Right ventricle myocardium superior (tissue), 1 donor: ENCODE measurements at regions of chr13 and their contacts with region 1.

Region 1: DNA sequence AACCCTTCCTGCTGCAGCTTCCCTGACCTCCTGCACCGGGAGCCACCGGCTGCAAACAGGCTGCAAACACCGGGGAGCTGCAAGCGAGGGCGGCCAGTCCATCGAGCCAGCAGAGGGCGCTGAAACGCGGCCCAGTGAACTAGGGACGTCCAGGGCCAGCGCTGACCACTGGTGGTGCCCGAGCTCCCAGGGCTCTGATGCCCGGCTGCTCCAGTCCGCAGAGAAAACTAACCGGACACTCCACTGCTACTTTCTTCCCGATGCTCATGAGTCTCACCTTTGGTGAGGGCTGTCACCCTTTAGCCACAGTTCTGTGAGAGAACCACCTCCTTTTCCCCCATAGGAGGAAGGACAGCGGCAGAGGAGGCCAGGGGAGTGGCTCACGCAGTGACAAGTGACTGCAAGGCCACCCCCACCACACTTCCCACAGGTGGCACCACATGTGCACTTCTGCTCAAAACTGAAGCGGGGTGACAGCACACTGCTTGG is 82.8 kb upstream of the MTIF3 start:
- DNase-seq: peak; percentile 90
- ATAC-seq: peak; percentile 99

Region 2: GRCh38 chr13:27374650-27375049 is 158.5 kb before region 1 on chr13:
- intact Hi-C with region 1: loop called (anchors 2 kb)
- DNase-seq: no peak
- ATAC-seq: peak; percentile 98

Region 3: DNA sequence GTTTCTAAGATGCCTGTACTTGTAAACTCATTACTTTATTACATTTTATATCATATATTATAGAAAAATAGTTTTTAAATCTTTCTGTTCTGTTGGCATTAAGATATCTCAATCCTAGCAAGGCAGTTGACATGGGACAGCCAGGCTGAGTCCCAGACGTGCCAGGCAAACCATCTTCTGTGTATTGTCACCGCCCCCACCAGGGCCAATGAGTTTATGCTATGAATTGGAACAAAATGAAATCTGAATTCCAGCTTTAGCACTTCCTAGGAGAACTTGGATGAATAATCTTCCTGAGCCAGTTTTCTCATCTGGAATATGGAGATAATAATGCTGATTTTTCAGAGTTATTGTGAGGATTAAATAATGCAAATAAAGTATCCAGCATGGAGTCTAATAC is 179.2 kb after region 1 on chr13:
- intact Hi-C with region 1: loop called (anchors 10 kb)
- DNase-seq: no peak
- ATAC-seq: peak; percentile 46

Region 4: DNA sequence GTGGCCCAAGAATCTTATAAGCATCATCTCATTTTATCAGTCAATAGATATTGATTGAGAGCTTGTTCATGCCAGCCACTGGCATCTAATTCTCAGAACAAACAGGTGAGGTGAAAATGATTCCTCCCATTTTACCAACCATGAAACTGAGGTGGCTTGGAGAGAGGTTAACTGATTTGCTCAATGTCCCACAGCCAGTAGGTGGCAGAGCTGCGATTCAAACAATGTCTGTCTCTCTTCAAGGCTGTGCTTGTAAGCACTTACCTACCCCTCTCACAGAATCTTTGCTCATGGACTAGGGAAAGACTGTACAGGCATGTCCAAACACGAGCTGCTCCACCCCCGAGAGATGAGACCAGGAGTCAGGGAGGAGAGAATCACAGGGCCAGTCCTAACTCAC is 237.6 kb after region 1 on chr13:
- intact Hi-C with region 1: loop called (anchors 10 kb)
- DNase-seq: no peak
- ATAC-seq: no peak

Region 5: DNA sequence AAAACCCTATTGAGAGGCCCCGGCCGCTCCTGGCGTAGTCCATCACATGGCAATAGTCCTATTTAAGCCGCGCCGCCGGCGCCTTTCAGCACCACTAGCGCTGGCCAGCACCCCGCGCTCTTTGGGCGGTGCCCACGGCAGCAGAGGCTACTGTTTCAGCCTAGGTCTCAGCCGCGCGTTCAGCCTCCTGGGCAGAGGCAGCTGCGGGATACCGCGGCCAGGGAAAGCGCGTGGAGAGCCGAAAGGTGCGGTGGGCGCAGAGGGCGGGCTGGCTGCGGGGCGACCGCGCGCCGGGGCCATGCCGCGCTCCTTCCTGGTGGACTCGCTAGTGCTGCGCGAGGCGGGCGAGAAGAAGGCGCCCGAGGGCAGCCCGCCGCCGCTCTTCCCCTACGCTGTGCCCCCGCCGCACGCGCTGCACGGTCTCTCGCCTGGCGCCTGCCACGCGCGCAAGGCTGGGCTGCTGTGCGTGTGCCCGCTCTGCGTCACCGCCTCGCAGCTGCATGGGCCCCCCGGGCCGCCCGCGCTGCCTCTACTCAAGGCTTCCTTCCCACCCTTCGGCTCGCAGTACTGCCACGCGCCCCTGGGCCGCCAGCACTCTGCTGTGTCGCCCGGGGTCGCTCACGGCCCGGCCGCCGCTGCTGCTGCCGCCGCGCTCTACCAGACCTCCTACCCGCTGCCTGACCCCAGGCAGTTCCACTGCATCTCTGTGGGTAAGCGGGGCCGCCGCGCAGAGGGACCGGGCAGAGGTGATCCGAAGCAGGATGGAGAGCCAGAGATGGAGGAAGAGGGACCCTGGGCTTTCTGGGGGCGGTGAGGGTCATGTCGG is 259.4 kb after region 1 on chr13 and contains the start of gene GSX1:
- intact Hi-C with region 1: no loop called
- DNase-seq: peak; percentile 80
- ATAC-seq: peak; percentile 97
- total RNA-seq, gene GSX1: not detected

Region 6: DNA sequence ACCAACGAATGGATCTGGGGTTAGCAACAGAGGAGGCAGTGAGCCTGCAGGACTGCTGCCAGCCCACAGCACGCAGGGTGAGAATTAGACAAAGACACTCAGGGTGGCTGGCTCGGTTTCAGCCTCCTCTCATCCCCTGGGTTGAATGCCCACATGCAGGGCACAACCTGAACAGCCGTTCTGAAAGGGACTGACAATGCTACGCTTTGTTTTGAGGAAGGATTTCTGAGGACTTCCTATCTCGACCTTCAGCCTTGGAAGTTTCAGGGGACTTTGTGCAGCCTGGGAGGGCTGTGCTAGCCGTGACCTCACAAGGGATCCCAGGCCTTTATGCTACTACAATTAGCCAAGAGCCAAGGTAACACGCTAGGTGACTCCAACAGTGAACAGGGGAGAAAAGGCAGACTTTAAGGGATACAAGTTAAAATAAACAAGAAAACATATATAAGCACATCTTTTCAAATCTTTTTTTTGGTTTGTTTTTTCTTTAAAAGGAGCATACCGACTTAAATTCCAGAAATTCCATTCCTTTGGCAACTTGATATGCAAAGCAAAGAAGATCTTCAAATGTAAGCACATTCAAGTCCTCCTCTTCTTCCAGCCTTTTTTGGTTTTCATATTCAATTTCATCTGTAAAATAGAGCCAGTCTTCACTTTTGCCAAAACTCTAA is 489.8 kb after region 1 on chr13:
- intact Hi-C with region 1: no loop called
- DNase-seq: peak; percentile 48
- ATAC-seq: peak; percentile 56